Caco-2 (cell line): ENCODE measurements at regions of chr5 and their contacts with region 1.

Region 1: DNA sequence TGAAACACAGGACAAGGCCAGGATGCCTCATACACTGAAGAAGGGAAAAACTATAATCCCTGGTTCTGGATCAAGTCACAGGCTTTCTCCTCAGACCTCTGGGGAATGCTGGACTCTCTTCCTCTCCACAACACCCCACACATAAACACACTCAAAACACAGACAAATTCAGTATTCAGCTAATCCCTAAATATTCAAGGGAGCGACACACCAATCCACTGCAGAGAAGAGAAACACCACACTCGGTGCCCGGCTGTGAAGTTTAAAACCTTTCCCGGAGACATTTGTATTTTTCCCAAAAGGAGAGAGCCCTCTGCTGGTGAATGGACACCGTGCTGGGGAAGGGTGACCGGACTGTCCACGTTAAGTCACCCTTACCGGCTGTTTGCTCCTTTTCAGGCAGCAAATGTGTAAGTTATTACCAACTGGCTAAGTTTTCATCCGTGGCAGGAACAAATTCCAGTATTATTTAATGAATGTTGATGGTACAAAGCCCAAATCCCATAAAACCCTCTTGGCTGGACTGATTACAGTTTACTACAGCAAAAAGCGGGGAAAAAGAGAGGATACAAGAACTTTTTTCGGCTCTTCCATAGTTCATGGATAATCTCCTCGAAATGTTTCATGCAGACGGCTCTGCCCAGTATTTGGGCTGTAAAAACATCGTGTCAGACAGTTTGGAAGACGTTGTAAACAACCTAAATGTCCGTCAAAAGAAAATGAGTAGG is 130.9 kb upstream of the SLC30A5 start:
- DNase-seq: peak; percentile 63 to 73
- H3K4me3 ChIP-seq: no peak overlapping the region
- H3K4me3 Mint-ChIP-seq: peak overlapping the region; percentile 24
- H3K27ac Mint-ChIP-seq: no peak overlapping the region
- H3K4me1 ChIP-seq: no peaks in the 10 kb centered on the region
- H3K4me1 Mint-ChIP-seq: no peaks in the 10 kb centered on the region
- H3K27me3 ChIP-seq: no peaks in the 10 kb centered on the region
- H3K27me3 Mint-ChIP-seq: no peaks in the 10 kb centered on the region
- CTCF ChIP-seq: peak; percentile 89 to 93

Region 2: DNA sequence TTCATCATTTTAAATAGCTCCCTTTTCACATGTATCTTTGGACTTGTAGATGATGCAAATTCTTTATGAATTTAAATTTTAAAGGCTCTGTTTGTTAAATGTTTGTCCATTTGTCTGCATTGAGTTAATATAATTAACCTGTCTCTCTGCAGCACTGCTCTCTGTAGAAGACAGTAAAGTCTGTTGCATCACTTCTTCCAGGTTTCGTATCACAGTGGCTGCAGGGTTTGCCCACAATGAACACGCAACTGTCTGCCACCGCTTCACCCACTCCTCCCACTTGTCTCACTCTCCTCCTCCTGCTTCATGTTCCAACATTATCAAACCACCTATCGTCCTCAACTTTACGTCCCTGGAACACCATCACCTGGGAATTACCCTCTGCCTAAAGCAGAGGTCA is 100.4 kb before region 1 on chr5:
- CTCF ChIA-PET with region 1: no interaction called
- POLR2A ChIA-PET with region 1: no interaction called
- intact Hi-C with region 1: no loop called
- DNase-seq: no peak
- H3K4me3 ChIP-seq: no peak overlapping the region
- H3K4me3 Mint-ChIP-seq: no peak overlapping the region
- H3K27ac Mint-ChIP-seq: no peak overlapping the region
- H3K4me1 ChIP-seq: no peaks in the 10 kb centered on the region
- H3K4me1 Mint-ChIP-seq: no peaks in the 10 kb centered on the region
- H3K27me3 ChIP-seq: no peaks in the 10 kb centered on the region; the same call in 1 of the 2 replicates
- H3K27me3 Mint-ChIP-seq: peaks cover 13% of the 10 kb centered on the region
- CTCF ChIP-seq: no peak

Region 3: DNA sequence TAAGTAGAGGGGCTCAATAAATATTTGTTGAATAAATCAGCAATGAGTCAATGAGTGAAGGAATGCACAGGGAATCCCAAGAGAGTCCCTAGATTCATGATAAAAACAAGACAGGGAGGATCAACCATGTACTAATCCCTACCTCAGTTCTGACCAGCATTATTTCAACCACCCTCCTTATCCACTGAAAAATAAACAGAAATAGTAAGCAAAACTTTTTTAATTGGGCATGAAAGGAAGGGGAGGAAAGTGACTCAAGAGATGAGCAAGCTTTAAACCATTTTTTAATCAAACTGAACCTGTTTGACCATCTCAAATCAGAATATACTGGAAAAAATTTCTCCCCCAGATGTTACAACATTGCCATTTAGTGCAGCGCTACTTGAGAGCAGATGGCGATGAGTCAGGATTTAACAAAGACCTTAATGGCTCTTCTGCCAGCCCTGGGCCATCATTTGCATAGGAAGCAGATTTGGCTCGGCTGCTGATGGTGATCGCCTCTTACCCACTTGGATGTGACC is 63.9 kb before region 1 on chr5:
- CTCF ChIA-PET with region 1: no interaction called
- POLR2A ChIA-PET with region 1: no interaction called
- intact Hi-C with region 1: loop called (anchors 10 kb)
- DNase-seq: no peak
- H3K4me3 ChIP-seq: no peak overlapping the region
- H3K4me3 Mint-ChIP-seq: no peak overlapping the region
- H3K27ac Mint-ChIP-seq: no peak overlapping the region
- H3K4me1 ChIP-seq: no peaks in the 10 kb centered on the region
- H3K4me1 Mint-ChIP-seq: no peaks in the 10 kb centered on the region
- H3K27me3 ChIP-seq: no peaks in the 10 kb centered on the region
- H3K27me3 Mint-ChIP-seq: no peaks in the 10 kb centered on the region
- CTCF ChIP-seq: no peak

Region 4: GRCh38 chr5:68924490-68925145 is 38.3 kb before region 1 on chr5:
- CTCF ChIA-PET with region 1: no interaction called
- POLR2A ChIA-PET with region 1: no interaction called
- intact Hi-C with region 1: no loop called
- DNase-seq: no peak
- H3K4me3 ChIP-seq: no peak overlapping the region
- H3K4me3 Mint-ChIP-seq: no peak overlapping the region
- H3K27ac Mint-ChIP-seq: no peak overlapping the region
- H3K4me1 ChIP-seq: no peaks in the 10 kb centered on the region
- H3K4me1 Mint-ChIP-seq: no peaks in the 10 kb centered on the region
- H3K27me3 ChIP-seq: no peaks in the 10 kb centered on the region; the same call in 1 of the 2 replicates
- H3K27me3 Mint-ChIP-seq: peaks cover 4% of the 10 kb centered on the region
- CTCF ChIP-seq: no peak

Region 5: GRCh38 chr5:69300537-69301203 is 337.7 kb after region 1 on chr5:
- CTCF ChIA-PET with region 1: no interaction called
- POLR2A ChIA-PET with region 1: no interaction called
- intact Hi-C with region 1: no loop called
- DNase-seq: peak; percentile 37 to 54
- H3K4me3 ChIP-seq: no peak overlapping the region
- H3K4me3 Mint-ChIP-seq: no peak overlapping the region
- H3K27ac Mint-ChIP-seq: peak overlapping the region; percentile 34
- H3K4me1 ChIP-seq: peaks cover 30% of the 10 kb centered on the region
- H3K4me1 Mint-ChIP-seq: peaks cover 20% of the 10 kb centered on the region
- H3K27me3 ChIP-seq: no peaks in the 10 kb centered on the region
- H3K27me3 Mint-ChIP-seq: no peaks in the 10 kb centered on the region
- CTCF ChIP-seq: no peak